ENCODE measurements at regions of chr1 and their contacts with region 1.

Region 1: GRCh38 chr1:201447911-201448871 is 20.8 kb downstream of the PHLDA3 start:
- DNase-seq: peak; percentile 81
- ATAC-seq: peak; percentile 97
- H3K4me3 Mint-ChIP-seq: no peak overlapping the region
- H3K27ac Mint-ChIP-seq: no peak overlapping the region
- H3K4me1 Mint-ChIP-seq: peaks cover 21% of the 10 kb centered on the region
- H3K27me3 Mint-ChIP-seq: peaks cover 49% of the 10 kb centered on the region

Region 2: DNA sequence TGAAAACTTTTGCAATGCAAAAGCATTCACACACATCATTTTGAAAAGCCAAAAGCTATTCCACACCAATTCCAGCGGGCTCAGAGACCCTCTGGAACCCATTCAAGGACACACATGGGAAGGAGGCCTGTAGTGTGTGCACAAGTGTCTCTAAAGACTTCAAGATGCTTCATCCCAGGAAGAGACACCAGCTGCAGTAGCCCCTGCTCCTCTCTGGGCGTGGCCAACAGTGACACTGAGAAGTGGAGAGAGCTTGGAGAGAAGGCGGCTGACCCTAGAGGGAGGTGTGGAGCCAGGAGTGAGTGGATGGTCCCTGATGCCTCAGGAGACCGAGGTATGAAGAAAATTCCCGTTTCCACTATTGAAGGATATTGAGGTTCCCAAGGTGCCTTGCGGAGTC is 11.8 kb before region 1 on chr1:
- CTCF ChIA-PET with region 1: interaction called, 33 read pairs
- DNase-seq: no peak
- ATAC-seq: no peak
- H3K4me3 Mint-ChIP-seq: no peak overlapping the region
- H3K27ac Mint-ChIP-seq: no peak overlapping the region
- H3K4me1 Mint-ChIP-seq: peaks cover 5% of the 10 kb centered on the region
- H3K27me3 Mint-ChIP-seq: peaks cover 35% of the 10 kb centered on the region

Region 3: GRCh38 chr1:201463071-201463552 is 14.9 kb after region 1 on chr1:
- CTCF ChIA-PET with region 1: interaction called, 34 read pairs
- DNase-seq: no peak
- ATAC-seq: no peak
- H3K4me3 Mint-ChIP-seq: no peak overlapping the region
- H3K27ac Mint-ChIP-seq: no peak overlapping the region
- H3K4me1 Mint-ChIP-seq: peaks cover 8% of the 10 kb centered on the region
- H3K27me3 Mint-ChIP-seq: peaks cover 6% of the 10 kb centered on the region

Region 4: DNA sequence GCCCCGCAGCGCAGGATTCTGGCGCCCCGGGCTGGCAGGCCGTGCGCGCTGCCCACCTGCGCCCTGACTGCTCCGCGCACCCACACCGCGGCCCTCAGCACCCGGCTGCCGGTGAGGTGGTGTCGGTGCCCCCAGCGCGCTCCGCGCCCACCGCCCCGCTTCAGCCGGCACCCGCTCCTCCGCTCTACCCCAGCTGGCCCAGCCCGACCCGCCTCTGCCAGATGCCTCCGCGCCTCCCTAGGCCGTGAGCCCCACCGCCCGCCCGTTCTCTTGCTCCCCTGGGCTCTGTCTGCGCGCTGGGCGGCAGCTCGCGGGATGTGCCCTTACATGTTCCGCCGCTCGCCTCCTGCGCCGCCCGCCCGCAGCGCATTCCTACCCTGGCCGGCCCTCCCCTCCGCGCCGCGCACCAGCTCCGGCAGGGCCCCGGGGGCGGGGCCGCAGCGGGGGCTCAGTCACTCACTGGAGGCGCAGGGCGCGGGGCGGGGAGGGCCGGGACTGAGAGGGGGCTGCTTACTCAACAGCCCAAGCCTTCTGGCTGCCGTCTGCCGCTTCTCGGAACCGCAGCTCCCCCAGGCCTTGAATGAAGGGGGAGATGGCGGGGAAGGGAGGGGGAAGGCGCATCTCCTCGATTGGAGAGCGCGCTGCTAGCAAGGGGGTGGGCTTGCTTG is 20.8 kb after region 1 on chr1 and contains the start of gene PHLDA3:
- CTCF ChIA-PET with region 1: interaction called, 34 read pairs
- DNase-seq: peak; percentile 71
- ATAC-seq: peak; percentile 85
- H3K4me3 Mint-ChIP-seq: peak within 1 kb of the TSS; percentile 76
- H3K27ac Mint-ChIP-seq: peak within 1 kb of the TSS; percentile 54
- H3K4me1 Mint-ChIP-seq: peaks cover 18% of the 10 kb centered on the region
- H3K27me3 Mint-ChIP-seq: peaks cover 39% of the 10 kb centered on the region
- total RNA-seq, gene PHLDA3: 12.9 to 23.5 TPM

Region 5: DNA sequence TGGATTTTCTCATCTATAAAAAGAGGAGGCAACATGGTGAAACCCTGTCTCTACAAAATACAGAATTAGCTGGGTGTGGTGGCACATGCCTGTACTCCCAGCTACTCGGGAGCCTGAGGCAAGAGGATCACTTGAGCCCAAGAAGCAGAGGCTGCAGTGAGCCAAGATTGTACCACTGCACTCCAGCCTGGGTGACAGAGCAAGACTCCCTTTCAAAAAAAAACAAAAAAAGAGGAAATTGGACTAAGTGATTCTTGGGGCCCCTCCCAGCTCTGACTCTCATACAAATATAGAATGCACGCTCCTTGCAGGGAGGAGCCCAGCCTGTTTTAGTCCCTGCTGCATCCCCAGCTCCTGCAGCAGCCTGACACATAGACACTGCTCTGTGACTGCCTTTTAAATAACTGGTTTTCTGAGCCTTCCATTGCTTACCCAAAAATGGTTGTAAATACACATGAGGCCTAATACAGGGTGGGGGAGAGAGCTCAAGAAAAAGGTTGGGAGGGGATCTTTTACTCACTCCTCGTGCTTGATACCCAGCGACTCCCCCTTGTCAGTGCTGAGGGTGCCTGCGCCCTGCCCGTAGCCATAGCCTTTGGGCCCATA is 41.6 kb after region 1 on chr1:
- CTCF ChIA-PET with region 1: interaction called, 164 read pairs
- DNase-seq: no peak
- ATAC-seq: no peak
- H3K4me3 Mint-ChIP-seq: no peak overlapping the region
- H3K27ac Mint-ChIP-seq: no peak overlapping the region
- H3K4me1 Mint-ChIP-seq: peaks cover 16% of the 10 kb centered on the region
- H3K27me3 Mint-ChIP-seq: no peaks in the 10 kb centered on the region

Region 6: DNA sequence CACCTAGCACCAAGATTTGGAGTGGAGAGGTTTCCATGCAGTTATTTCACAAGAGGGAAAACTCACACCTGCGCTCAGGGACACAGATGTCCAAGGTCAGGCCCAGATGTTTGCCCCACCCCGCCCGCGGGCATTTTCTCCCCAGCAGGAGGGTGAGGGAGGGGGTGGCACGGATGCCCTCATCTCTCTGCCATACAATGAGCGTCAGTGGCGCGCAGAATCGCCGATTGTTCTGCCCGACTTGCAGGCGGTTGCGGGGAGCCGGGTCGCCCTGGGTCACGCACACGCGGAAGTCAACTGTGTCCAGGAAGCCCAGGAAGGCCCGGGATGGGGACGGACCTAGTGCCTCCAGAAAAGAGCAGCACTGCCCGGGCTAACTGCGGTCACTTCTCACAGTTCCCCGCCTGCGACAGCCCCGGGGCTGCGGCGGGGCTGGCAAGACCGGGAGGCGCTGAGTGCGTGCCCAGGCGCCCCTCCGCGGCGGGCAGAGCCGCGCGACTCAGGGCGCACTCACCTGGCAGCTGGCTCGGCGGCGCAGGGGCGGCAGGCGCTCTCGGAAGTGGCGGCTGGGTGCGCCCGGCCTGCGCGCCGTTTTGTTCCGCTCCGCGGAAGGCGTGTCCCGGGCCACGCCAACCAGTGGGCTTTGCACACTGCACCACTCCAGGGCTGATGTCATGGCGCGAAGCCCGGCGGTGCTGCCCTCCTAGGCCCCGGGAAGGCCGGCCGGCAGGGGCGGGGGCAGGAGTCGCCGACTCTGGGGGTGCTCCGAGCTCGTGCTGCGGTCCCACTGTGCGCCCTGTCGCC is 58.6 kb after region 1 on chr1 and contains the start of gene CSRP1:
- CTCF ChIA-PET with region 1: interaction called, 135 read pairs
- DNase-seq: peak; percentile 92
- ATAC-seq: peak; percentile 96
- H3K4me3 Mint-ChIP-seq: peak within 1 kb of the TSS; percentile 94
- H3K27ac Mint-ChIP-seq: peak within 1 kb of the TSS; percentile 90
- H3K4me1 Mint-ChIP-seq: peaks cover 55% of the 10 kb centered on the region
- H3K27me3 Mint-ChIP-seq: no peaks in the 10 kb centered on the region
- total RNA-seq, gene CSRP1: 71.7 to 78.3 TPM

Region 7: DNA sequence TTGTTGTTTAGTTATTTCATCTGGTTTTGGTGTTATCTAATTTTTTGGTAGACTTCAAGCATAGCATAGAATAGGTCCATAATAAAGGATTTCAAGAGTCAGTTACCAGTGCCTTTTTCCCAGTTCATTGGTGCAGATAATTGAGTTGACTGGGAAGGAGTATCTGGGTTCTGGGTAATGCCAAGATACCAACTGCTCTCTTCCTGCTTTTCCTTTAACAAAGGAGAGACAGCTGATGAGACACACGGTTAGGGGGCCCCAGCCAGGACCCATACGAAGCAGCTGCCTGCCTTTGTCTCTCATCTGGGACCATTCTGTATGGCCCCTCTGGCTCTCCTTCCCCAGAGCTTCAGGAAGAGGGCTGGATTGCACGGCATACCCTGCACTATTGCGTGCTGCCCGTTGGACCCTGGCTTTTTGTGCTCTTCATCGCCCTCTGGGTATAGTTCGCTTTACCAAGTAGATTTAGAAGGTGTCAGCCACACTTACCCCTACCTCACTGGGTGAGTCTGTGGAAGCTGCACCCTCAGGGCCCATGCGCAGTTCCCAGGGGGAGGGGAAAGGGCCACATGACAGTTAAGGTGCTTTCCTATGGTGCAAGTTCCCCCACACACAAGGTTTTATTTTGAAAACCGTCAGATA is 97.8 kb after region 1 on chr1:
- CTCF ChIA-PET with region 1: no interaction called
- DNase-seq: no peak
- ATAC-seq: no peak
- H3K4me3 Mint-ChIP-seq: no peak overlapping the region
- H3K27ac Mint-ChIP-seq: no peak overlapping the region
- H3K4me1 Mint-ChIP-seq: no peaks in the 10 kb centered on the region
- H3K27me3 Mint-ChIP-seq: peaks cover 36% of the 10 kb centered on the region

Measured in activated CD8-positive, alpha-beta memory T cell treated with anti-CD3 and anti-CD28 coated beads, Interleukin-2, amount 10 ng/mL, durations not matched to agents 7 days and 5 days (primary cell).